Ascending aorta (tissue), 2 donors: ENCODE measurements at regions of chr3 and their contacts with region 1.

Region 1: GRCh38 chr3:72255791-72256559 is 471.0 kb upstream of the PROK2 start:
- DNase-seq: no peak
- H3K4me3 ChIP-seq: no peak overlapping the region
- H3K27ac ChIP-seq: peak overlapping the region in 1 of 2 donors; percentile 31
- H3K4me1 ChIP-seq: peaks cover 9 to 19% of the 10 kb centered on the region in 2 donors
- H3K27me3 ChIP-seq: no peaks in the 10 kb centered on the region
- CTCF ChIP-seq: no peak

Region 2: GRCh38 chr3:71955240-71956068 is 300.5 kb before region 1 on chr3:
- intact Hi-C with region 1: loop called (anchors 5 kb)
- DNase-seq: peak in 1 of 2 donors; percentile 85
- H3K4me3 ChIP-seq: no peak overlapping the region
- H3K27ac ChIP-seq: no peak overlapping the region
- H3K4me1 ChIP-seq: peaks cover 0 to 2% of the 10 kb centered on the region in 2 donors
- H3K27me3 ChIP-seq: no peaks in the 10 kb centered on the region
- CTCF ChIP-seq: peak; percentile 69 to 89 (median 71)

Region 3: GRCh38 chr3:72100601-72101187 is 155.3 kb before region 1 on chr3:
- intact Hi-C with region 1: loop called (anchors 5 kb)
- DNase-seq: peak; percentile 80 to 95
- H3K4me3 ChIP-seq: peak overlapping the region; percentile 35 to 54
- H3K27ac ChIP-seq: no peak overlapping the region
- H3K4me1 ChIP-seq: peaks cover 0 to 6% of the 10 kb centered on the region in 2 donors
- H3K27me3 ChIP-seq: no peaks in the 10 kb centered on the region
- CTCF ChIP-seq: no peak

Region 4: GRCh38 chr3:72353236-72354128 is 97.5 kb after region 1 on chr3:
- intact Hi-C with region 1: no loop called
- DNase-seq: peak in 1 of 2 donors; percentile 41
- H3K4me3 ChIP-seq: no peak overlapping the region
- H3K27ac ChIP-seq: no peak overlapping the region
- H3K4me1 ChIP-seq: no peaks in the 10 kb centered on the region
- H3K27me3 ChIP-seq: no peaks in the 10 kb centered on the region
- CTCF ChIP-seq: no peak